ENCODE measurements at regions of chrX and their contacts with region 1.

Region 1: GRCh38 chrX:10119399-10119990 is 37.3 kb upstream of the CLCN4 start:
- DNase-seq: peak; percentile 82 to 91
- H3K4me3 ChIP-seq: no peak overlapping the region
- H3K27ac ChIP-seq: peak overlapping the region in 3 of 5 donors; percentile 12 to 50 (median 25)
- H3K4me1 ChIP-seq: peaks cover 0 to 31% (median 3%) of the 10 kb centered on the region in 4 donors
- H3K27me3 ChIP-seq: peaks cover 0 to 1% (median 0%) of the 10 kb centered on the region in 3 donors
- CTCF ChIP-seq: peak; percentile 95 to 100 (median 100)
- EP300 ChIP-seq: no peak
- POLR2A ChIP-seq: no peak

Region 2: DNA sequence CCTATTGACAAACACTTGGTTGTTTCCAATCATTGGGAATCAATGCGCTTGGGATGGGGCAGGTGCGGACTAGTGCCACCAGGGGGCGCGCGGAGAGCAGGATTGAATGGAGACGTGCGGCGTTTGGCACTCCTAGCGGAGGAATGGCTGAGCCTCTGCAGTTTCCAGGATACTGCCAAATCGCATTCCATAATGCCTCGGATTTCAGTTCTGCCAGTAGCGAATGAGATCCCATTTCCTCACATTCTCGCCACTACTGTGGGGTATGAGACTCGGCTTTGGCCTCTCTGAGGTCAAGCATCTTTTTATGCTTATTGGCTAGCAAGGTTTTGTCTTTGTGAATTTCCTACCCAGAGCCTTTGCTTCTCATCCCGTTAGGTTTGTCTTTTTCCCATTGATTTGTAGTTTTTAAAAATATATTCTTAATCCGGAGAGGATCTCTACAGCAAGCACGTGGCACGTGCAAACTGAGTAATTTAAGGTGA is 123.6 kb before region 1 on chrX:
- intact Hi-C with region 1: loop called (anchors 5 kb)
- DNase-seq: peak; percentile 88 to 89
- H3K4me3 ChIP-seq: no peak overlapping the region
- H3K27ac ChIP-seq: no peak overlapping the region
- H3K4me1 ChIP-seq: no peaks in the 10 kb centered on the region
- H3K27me3 ChIP-seq: no peaks in the 10 kb centered on the region
- CTCF ChIP-seq: peak in 6 of 7 experiments; percentile 15 to 96 (median 86)
- EP300 ChIP-seq: no peak
- POLR2A ChIP-seq: no peak